A549 (cell line): ENCODE measurements at regions of chr15 and their contacts with region 1.

Region 1: GRCh38 chr15:76190834-76191538 is 120.3 kb downstream of the ETFA start:
- DNase-seq: peak; percentile 83 to 98
- ATAC-seq: peak; percentile 84 to 93
- H3K4me3 ChIP-seq: peak overlapping the region; percentile 18; the same call in 1 of the 3 replicates
- H3K27ac ChIP-seq: peak overlapping the region; percentile 22 to 60; a peak in 4 of 6 replicates
- H3K4me1 ChIP-seq: peaks cover 15% of the 10 kb centered on the region
- CTCF ChIP-seq: peak; percentile 97
- EP300 ChIP-seq: no peak
- POLR2A ChIP-seq: no peak
- RAD21 ChIP-seq: peak; percentile 97 to 98

Region 2: DNA sequence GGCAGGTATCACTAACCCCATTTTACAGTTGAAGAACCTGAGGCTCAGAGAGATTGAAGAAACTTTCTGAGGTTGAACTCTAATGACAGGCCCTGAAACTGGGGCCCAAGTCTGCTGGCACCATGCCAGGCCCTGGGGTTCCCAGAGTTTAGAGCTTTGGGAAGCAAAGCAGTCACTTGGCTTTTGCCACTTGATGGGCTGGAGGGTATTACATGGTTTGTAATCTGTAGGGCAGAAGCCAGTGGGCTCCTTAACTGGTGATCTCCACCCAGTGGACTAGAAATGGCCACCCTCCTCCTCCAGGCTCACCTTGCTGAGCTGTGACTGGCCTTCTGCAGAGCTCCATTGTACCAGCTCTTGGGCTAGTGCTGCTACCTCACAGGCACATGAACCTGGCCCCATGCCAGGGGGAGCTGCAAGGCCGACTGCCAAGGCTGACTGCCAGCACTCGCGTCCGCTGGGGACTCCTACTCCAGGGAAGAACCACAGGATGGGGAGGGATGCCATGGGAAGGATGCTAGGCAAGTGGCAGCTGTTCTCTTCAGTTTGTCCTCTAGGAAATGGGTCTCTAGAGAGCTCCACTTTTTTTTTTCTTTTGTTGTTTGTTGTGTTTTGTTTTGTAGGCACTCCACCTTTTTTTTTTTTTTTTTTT is 15.5 kb after region 1 on chr15:
- CTCF ChIA-PET with region 1: interaction called, 115 read pairs
- POLR2A ChIA-PET with region 1: no interaction called
- DNase-seq: peak in 1 of 2 experiments; percentile 40
- ATAC-seq: no peak
- H3K4me3 ChIP-seq: no peak overlapping the region
- H3K27ac ChIP-seq: no peak overlapping the region
- H3K4me1 ChIP-seq: no peaks in the 10 kb centered on the region
- CTCF ChIP-seq: no peak
- EP300 ChIP-seq: no peak
- POLR2A ChIP-seq: no peak
- RAD21 ChIP-seq: no peak

Region 3: GRCh38 chr15:76223521-76223920 is 32.5 kb after region 1 on chr15:
- CTCF ChIA-PET with region 1: interaction called, 24 read pairs
- POLR2A ChIA-PET with region 1: no interaction called
- DNase-seq: no peak
- ATAC-seq: no peak
- H3K4me3 ChIP-seq: no peak overlapping the region
- H3K27ac ChIP-seq: no peak overlapping the region
- H3K4me1 ChIP-seq: no peaks in the 10 kb centered on the region
- CTCF ChIP-seq: no peak
- EP300 ChIP-seq: no peak
- POLR2A ChIP-seq: no peak
- RAD21 ChIP-seq: no peak

Region 4: DNA sequence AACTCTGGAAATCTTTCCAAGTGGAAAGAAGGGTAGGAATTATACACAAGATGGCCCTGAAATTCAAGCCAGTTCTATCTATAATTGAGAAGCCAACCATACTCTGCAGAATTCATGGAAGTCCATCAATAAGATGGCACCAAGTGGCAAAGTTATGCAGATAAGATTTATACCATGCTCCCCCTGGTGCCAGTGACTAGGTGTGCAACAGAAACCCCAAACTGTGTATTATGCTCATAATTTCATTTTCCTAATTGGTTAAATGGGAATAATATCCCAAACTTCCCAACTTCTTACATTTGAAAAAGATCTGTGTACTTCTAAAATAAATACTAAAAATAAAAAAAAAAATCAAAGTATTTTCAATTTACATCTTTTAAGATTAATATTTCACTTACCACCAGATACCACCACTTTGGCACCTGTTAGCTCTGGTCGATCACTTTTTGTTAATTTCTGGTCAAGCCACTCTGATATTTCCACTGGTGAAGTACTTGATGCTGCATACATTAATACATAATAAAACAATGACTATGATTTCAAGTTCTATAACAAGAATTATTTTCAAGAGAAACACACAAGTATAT is 94.3 kb after region 1 on chr15:
- CTCF ChIA-PET with region 1: interaction called, 13 read pairs
- POLR2A ChIA-PET with region 1: no interaction called
- DNase-seq: peak; percentile 53 to 78
- ATAC-seq: peak; percentile 88 to 89; a peak in 5 of 6 replicates
- H3K4me3 ChIP-seq: no peak overlapping the region
- H3K27ac ChIP-seq: no peak overlapping the region
- H3K4me1 ChIP-seq: no peaks in the 10 kb centered on the region
- CTCF ChIP-seq: peak; percentile 71
- EP300 ChIP-seq: no peak
- POLR2A ChIP-seq: no peak
- RAD21 ChIP-seq: peak; percentile 50 to 58

Region 5: DNA sequence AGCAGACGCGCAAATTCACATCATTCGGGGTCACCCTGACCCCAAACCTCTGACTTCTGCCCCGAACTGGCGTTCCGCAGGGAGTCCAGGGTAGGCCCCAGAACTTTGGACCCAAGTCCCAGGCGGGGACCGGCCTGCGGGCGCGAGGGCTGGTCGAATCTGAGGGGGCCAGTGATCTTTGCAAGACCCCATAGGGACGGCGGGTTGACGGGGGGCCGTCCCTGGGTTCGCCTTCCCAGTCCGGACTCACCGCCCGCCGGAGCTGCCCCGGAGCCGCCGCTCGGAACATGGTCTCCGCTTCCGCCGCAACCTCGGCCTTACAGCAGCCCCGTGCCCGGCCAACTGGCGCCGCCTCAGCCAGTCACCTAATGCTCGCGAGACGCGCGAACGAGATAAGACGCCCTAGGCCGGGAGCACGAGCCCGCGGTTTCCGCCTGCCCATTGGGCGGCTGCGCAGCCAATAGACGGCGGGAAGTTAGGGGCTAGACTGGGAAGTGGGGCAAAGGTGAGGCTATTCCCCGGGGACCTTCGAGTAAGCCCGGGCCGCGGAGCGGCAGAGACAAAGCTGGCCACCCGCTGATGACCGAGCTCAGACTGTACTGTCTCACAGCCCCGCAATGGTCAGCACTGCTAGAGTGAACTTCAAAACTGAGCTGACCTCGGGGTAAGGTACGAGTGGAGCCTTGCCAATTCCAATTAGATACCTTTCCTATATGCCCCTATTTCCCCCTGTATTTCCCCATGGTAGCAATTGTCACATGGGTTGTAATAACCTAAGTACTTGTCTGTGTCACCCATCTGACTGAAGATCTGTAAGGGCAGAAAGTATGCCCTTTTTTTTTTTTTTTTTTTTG is 120.3 kb after region 1 on chr15 and contains the start of gene ETFA:
- CTCF ChIA-PET with region 1: interaction called, 11 read pairs
- POLR2A ChIA-PET with region 1: no interaction called
- DNase-seq: peak; percentile 99 to 100
- ATAC-seq: peak; percentile 90 to 93
- H3K4me3 ChIP-seq: peak within 1 kb of the TSS; percentile 66
- H3K27ac ChIP-seq: peak within 1 kb of the TSS; percentile 87 to 94
- H3K4me1 ChIP-seq: peaks cover 56% of the 10 kb centered on the region
- CTCF ChIP-seq: no peak
- EP300 ChIP-seq: no peak
- POLR2A ChIP-seq: peak; percentile 94
- RAD21 ChIP-seq: peak in 1 of 2 experiments; percentile 17; a peak in 1 of 5 replicates
- polyA plus RNA-seq, gene ETFA: 395 and 412 TPM in 2 replicates

Region 6: GRCh38 chr15:76330080-76330680 is 139.2 kb after region 1 on chr15:
- CTCF ChIA-PET with region 1: interaction called, 44 read pairs
- POLR2A ChIA-PET with region 1: no interaction called
- DNase-seq: peak; percentile 81 to 90
- ATAC-seq: peak; percentile 78 to 88
- H3K4me3 ChIP-seq: no peak overlapping the region
- H3K27ac ChIP-seq: peak overlapping the region; percentile 29 to 40; a peak in 4 of 6 replicates
- H3K4me1 ChIP-seq: peaks cover 48% of the 10 kb centered on the region
- CTCF ChIP-seq: peak; percentile 43
- EP300 ChIP-seq: no peak
- POLR2A ChIP-seq: no peak
- RAD21 ChIP-seq: peak; percentile 58 to 77

Region 7: GRCh38 chr15:76866716-76867321 is 675.8 kb after region 1 on chr15:
- CTCF ChIA-PET with region 1: interaction called, 34 read pairs
- POLR2A ChIA-PET with region 1: no interaction called
- DNase-seq: peak; percentile 18 to 52
- ATAC-seq: peak in 1 of 2 experiments; percentile 75; a peak in 4 of 6 replicates
- H3K4me3 ChIP-seq: no peak overlapping the region
- H3K27ac ChIP-seq: no peak overlapping the region
- H3K4me1 ChIP-seq: no peaks in the 10 kb centered on the region
- CTCF ChIP-seq: peak; percentile 87
- EP300 ChIP-seq: no peak
- POLR2A ChIP-seq: no peak
- RAD21 ChIP-seq: peak; percentile 83 to 91